ENCODE measurements at regions of chr7 and their contacts with region 1.

Region 1: DNA sequence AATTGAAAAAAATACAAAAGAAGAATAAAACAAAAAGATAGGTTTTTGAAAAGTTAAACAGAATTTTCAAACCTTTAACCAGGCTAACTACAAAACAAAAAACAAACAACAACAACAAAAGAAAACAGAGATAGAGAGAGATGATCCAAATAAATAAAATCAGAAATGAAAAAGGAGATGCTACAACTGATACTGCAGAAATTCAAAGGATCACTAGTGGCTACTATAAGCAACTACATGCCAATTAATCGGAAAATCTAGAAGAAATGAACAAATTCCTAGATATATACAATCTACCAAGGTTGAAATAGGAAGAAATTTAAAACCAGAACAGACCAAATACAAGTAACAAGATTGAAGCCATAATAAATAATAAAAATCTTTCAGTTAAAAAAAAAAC is 326.8 kb upstream of the VSTM2A start:
- DNase-seq: no peak
- ATAC-seq: no peak
- H3K4me3 ChIP-seq: no peak overlapping the region
- H3K27ac ChIP-seq: no peak overlapping the region
- H3K4me1 ChIP-seq: no peaks in the 10 kb centered on the region
- H3K27me3 ChIP-seq: no peaks in the 10 kb centered on the region

Region 2: DNA sequence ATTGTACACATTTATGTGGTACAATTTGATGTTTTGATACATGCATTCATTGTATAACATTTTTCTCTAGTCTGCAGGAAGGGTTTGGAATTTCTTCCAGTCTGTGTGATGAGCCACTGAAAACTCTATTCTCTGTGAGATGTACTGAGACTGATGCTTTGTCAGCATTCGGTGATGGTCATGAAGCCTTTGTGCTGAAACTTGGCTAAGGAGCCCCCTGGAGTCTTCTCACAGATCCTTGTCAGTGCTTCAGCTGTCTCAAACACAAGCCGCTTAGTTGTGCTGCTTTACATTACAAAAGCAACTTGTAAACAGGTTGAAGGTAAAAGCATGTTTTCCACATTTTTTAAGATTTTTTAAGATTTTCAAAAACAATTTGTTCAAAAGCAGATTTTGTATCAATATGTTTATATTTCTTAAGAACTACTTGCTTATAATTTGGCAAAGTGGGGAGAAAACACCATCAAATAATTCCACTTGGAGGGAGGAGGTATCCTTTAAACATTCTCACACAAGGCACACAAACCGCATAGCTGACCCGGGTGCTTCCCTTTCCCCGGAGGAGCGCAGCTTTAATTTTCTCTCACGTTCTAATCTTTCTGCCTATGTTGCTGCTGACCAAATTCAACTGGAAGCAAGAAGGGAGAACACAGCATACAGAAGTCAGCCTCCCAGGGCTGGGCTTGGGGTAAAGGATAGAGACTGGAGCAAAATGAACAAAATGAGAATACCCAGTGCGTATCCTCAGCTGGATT is 76.9 kb after region 1 on chr7:
- intact Hi-C with region 1: loop called in 1 of 4 experiments (anchors 10 kb)
- DNase-seq: no peak
- ATAC-seq: no peak
- H3K4me3 ChIP-seq: no peak overlapping the region
- H3K27ac ChIP-seq: no peak overlapping the region
- H3K4me1 ChIP-seq: no peaks in the 10 kb centered on the region
- H3K27me3 ChIP-seq: no peaks in the 10 kb centered on the region

Region 3: DNA sequence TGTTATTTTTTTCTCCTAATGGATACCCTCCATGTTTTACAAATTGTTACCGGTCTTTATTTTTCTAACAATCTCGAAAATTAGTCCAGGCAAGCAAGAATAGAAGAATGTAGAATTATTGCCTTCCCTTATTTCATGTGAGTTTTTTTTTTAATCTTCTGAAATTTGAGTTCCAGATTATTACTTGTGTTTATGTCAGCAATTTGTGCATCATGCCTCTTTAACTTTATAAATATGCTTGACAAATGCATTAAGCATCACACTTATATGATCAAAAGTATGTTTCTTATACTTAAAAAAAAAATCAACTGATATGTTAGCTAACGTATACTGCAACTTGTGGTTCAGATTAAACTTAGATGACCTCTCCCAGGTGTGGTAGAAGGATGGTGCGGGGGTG is 84.0 kb after region 1 on chr7:
- intact Hi-C with region 1: loop called in 2 of 4 experiments (anchors 10 kb)
- DNase-seq: no peak
- ATAC-seq: no peak
- H3K4me3 ChIP-seq: no peak overlapping the region
- H3K27ac ChIP-seq: no peak overlapping the region
- H3K4me1 ChIP-seq: no peaks in the 10 kb centered on the region
- H3K27me3 ChIP-seq: no peaks in the 10 kb centered on the region

Region 4: DNA sequence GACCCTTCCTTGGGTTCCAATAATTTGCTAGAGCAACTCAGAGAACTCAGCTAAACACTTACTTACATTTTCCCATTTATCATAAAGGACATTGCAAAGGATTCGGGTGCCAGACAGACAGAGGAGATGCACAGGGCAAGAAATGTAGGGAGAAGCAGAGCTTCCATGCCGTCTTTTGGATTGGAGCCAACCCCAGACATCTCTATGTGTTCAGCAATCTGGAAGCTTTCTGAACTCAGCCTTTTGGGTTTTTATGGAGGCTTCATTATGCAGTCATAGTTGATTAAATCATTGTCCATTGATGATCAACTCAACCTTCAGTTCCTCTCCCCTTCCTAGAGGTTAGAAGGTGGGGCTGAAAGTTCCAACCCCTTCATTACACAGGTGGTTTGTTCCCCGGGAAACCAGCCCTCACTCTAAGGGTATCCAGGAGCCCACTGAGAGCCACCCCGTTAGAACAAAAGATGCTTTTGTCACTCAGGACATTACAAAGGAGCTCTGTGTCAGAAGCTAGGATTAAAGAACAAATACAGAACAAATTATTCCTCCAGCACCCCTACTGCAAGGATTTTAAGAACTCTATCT is 114.9 kb after region 1 on chr7:
- intact Hi-C with region 1: no loop called
- DNase-seq: no peak
- ATAC-seq: no peak
- H3K4me3 ChIP-seq: no peak overlapping the region
- H3K27ac ChIP-seq: no peak overlapping the region
- H3K4me1 ChIP-seq: no peaks in the 10 kb centered on the region
- H3K27me3 ChIP-seq: no peaks in the 10 kb centered on the region

Region 5: GRCh38 chr7:54349229-54349628 is 133.8 kb after region 1 on chr7:
- intact Hi-C with region 1: no loop called
- DNase-seq: no peak
- ATAC-seq: no peak
- H3K4me3 ChIP-seq: no peak overlapping the region
- H3K27ac ChIP-seq: no peak overlapping the region
- H3K4me1 ChIP-seq: no peaks in the 10 kb centered on the region
- H3K27me3 ChIP-seq: no peaks in the 10 kb centered on the region